ENCODE measurements at regions of chr21 and their contacts with region 1.

Region 1: GRCh38 chr21:41520575-41521442 is 12.9 kb upstream of the TMPRSS2 start:
- DNase-seq: no peak
- H3K4me3 ChIP-seq: no peak overlapping the region
- H3K27ac ChIP-seq: no peak overlapping the region
- H3K4me1 ChIP-seq: no peaks in the 10 kb centered on the region
- H3K27me3 ChIP-seq: no peaks in the 10 kb centered on the region
- CTCF ChIP-seq: no peak
- POLR2A ChIP-seq: no peak

Region 2: DNA sequence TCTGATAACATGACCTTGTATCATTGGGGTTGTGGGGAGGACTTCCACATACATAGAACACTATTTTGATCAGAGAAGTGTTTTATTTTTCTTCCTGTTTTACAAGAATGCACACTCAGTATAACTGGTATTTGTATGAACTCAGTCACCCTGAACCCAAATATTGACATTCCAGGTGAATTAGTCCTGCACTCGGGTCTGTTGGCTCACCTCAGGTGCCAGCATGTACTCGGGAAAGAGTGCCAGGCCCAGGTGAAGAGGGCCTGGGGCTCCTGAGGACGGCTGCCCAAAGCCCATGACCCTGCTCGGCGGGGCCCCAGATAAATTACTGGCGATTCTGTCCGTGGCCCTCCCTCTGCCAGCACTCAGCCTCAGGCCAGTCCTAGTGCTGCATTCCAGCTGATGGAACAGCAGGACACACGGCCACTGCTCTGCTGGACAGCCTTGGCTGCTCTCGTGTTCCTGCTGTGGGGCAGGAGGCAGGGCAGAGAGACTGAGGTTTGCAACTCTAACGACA is 62.5 kb after region 1 on chr21:
- intact Hi-C with region 1: loop called (anchors 10 kb)
- DNase-seq: peak; percentile 40 to 63
- H3K4me3 ChIP-seq: no peak overlapping the region
- H3K27ac ChIP-seq: peak overlapping the region; percentile 36 to 59
- H3K4me1 ChIP-seq: no peaks in the 10 kb centered on the region
- H3K27me3 ChIP-seq: no peaks in the 10 kb centered on the region
- CTCF ChIP-seq: no peak
- POLR2A ChIP-seq: no peak

Region 3: GRCh38 chr21:41681939-41682731 is 161.3 kb after region 1 on chr21:
- intact Hi-C with region 1: loop called (anchors 2 kb)
- DNase-seq: no peak
- H3K4me3 ChIP-seq: no peak overlapping the region
- H3K27ac ChIP-seq: peak overlapping the region; percentile 93 to 94
- H3K4me1 ChIP-seq: peaks cover 4 to 12% of the 10 kb centered on the region in 2 donors
- H3K27me3 ChIP-seq: no peaks in the 10 kb centered on the region
- CTCF ChIP-seq: no peak
- POLR2A ChIP-seq: no peak

Measured in breast epithelium (tissue), 4 donors.